A673 (cell line): ENCODE measurements at regions of chr2 and their contacts with region 1.

Region 1: DNA sequence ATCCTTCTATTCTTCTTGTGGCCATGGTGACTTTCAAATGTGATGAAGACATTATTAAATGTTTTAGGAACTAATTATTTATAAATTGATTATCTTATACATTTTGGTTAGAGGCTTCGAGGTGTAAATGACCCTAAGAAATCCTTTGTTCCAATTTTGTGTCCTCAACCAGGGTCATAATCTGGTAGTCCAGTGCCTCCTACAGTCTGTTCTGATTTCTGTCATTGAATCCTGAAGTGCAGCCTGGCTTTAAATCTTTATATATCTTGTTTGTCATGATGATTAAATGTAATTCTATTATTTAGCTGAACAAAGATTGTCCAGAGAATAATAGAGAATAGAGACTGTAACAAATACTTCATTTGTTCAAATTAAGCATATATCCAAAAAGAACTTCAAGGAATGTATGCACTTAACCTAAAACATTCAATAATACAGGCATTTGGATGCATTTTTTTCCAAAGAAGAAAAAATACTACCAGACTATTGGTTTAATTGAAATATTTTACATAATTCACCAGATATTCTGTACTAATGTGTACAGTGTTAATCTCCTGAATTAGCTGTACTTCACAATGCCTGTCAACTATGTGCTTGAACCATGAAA is 89.8 kb downstream of the PRPF40A start:
- DNase-seq: peak; percentile 61
- H3K4me3 ChIP-seq: no peak overlapping the region
- H3K27ac ChIP-seq: no peak overlapping the region
- H3K4me1 ChIP-seq: peaks cover 12% of the 10 kb centered on the region
- H3K27me3 ChIP-seq: no peaks in the 10 kb centered on the region
- CTCF ChIP-seq: peak; percentile 77

Region 2: DNA sequence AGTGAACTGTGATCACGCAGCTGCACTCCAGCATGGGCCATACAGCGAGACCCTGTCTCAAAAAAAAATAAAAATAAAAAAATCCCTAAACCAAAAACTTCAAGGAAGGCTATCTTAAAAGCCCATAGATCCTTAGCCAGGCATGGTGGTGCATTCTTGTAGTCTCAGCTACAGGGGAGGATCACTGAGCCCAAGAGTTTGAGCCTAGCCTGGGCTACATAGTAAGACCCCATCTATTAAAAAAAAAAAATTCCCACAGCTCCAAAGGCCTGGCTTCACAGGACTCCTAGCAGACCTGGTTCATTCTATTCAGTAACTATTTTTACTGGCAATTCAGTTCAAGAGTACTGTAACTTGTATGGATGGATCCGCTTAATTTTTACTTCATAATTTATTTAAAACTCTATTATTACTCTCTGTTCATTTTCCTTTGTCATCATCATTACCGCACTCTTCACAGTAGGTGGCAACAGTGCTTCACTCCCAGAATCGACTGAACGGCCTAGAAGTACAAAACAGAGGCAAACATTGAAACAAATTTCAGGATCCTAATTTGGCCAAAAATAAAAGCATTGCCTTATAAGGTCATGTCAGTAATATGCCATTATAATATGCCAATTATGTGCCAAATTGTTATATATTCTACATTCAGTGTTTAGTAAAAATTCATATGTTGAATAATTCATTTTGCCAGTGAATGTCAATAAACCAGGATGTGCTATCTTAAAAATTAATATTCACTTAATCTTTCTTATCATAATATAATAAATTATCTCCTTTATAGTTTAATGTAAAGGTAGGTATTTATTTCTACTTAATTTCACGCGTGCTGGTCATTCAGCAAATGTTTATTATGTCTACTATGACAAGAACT is 437.6 kb before region 1 on chr2:
- CTCF ChIA-PET with region 1: no interaction called
- POLR2A ChIA-PET with region 1: no interaction called
- intact Hi-C with region 1: loop called (anchors 2 kb)
- DNase-seq: peak; percentile 84
- H3K4me3 ChIP-seq: no peak overlapping the region
- H3K27ac ChIP-seq: no peak overlapping the region
- H3K4me1 ChIP-seq: no peaks in the 10 kb centered on the region
- H3K27me3 ChIP-seq: no peaks in the 10 kb centered on the region
- CTCF ChIP-seq: peak; percentile 89

Region 3: GRCh38 chr2:152335010-152335725 is 292.3 kb before region 1 on chr2 and contains the start of gene FMNL2:
- CTCF ChIA-PET with region 1: no interaction called
- POLR2A ChIA-PET with region 1: no interaction called
- intact Hi-C with region 1: loop called (anchors 5 kb)
- DNase-seq: peak; percentile 91
- H3K4me3 ChIP-seq: peak within 1 kb of the TSS; percentile 97
- H3K27ac ChIP-seq: peak within 1 kb of the TSS; percentile 82
- H3K4me1 ChIP-seq: peaks cover 14% of the 10 kb centered on the region
- H3K27me3 ChIP-seq: no peaks in the 10 kb centered on the region
- CTCF ChIP-seq: peak; percentile 29; the same call in 1 of the 2 replicates
- total RNA-seq, gene FMNL2: 42.2 and 43.1 TPM in 2 replicates

Region 4: GRCh38 chr2:152421521-152422370 is 205.7 kb before region 1 on chr2:
- CTCF ChIA-PET with region 1: no interaction called
- POLR2A ChIA-PET with region 1: no interaction called
- intact Hi-C with region 1: loop called (anchors 5 kb)
- DNase-seq: peak; percentile 98
- H3K4me3 ChIP-seq: peak overlapping the region; percentile 8
- H3K27ac ChIP-seq: peak overlapping the region; percentile 86
- H3K4me1 ChIP-seq: peaks cover 75% of the 10 kb centered on the region
- H3K27me3 ChIP-seq: no peaks in the 10 kb centered on the region
- CTCF ChIP-seq: no peak

Region 5: DNA sequence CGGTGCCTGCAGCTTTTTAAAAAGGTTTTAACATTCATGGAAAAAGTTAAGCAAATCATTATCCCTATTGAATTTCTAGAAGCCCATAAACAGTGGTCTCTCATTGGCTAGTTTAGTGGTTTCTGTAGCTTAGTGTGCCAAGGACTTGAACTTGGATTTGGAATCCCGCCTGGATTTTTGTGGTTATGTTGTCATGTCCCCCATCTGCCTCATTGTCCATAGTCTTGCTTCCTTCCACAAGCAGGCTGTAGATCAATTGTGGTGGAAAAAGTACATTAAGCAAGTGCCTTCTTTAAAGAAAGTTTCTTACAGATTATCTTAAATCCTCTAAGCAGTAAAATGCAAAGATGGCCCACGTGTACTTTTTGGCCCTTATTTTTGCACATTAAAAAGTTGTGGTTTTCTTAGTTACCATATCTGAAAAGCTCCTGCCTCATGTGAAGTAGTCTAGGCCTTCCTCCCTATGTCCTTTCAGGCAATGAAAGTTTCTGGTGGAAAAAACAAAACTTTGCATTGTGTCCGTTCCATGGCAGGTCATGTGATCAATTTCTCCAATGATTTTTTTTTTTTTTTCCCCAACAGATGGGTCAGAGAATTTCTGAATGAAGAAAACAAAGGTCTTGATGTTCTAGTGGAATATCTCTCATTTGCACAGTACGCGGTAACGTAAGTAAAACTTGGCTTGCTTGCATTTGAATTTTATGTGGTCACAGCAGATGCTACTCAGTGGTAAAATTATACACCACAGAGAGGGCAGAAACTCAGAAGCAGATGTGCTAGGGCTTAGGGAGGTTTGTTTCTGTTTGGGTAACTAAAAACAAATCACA is 69.1 kb before region 1 on chr2:
- CTCF ChIA-PET with region 1: no interaction called
- POLR2A ChIA-PET with region 1: no interaction called
- intact Hi-C with region 1: loop called (anchors 2 kb)
- DNase-seq: no peak
- H3K4me3 ChIP-seq: no peak overlapping the region
- H3K27ac ChIP-seq: peak overlapping the region; percentile 20
- H3K4me1 ChIP-seq: peaks cover 21% of the 10 kb centered on the region
- H3K27me3 ChIP-seq: no peaks in the 10 kb centered on the region
- CTCF ChIP-seq: no peak

Region 6: DNA sequence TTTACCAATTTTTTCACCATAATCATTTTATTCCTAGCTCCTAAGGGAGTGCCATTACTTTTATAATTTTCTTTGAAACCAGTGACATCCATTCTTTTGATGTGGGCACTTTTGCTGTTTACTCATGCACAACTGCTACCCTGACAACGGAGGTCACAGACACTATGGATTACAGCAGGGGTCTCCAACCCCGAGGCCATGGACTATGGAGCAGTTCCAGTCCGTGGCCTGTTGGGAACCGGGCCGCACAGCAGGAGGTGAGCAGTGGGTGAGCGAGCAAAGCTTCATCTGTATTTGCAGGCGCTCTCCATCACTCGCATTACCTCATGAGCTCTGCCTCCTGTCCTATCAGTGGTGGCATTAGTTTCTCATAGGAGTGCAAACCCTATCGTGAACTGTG is 55.2 kb after region 1 on chr2:
- CTCF ChIA-PET with region 1: no interaction called
- POLR2A ChIA-PET with region 1: no interaction called
- intact Hi-C with region 1: no loop called
- DNase-seq: no peak
- H3K4me3 ChIP-seq: no peak overlapping the region
- H3K27ac ChIP-seq: no peak overlapping the region
- H3K4me1 ChIP-seq: no peaks in the 10 kb centered on the region
- H3K27me3 ChIP-seq: no peaks in the 10 kb centered on the region
- CTCF ChIP-seq: no peak